Right ventricle myocardium superior (tissue), 1 donor: ENCODE measurements at regions of chr3 and their contacts with region 1.

Region 1: GRCh38 chr3:113287803-113288648 is 76.7 kb downstream of the BOC start:
- DNase-seq: no peak
- ATAC-seq: peak; percentile 72

Region 2: DNA sequence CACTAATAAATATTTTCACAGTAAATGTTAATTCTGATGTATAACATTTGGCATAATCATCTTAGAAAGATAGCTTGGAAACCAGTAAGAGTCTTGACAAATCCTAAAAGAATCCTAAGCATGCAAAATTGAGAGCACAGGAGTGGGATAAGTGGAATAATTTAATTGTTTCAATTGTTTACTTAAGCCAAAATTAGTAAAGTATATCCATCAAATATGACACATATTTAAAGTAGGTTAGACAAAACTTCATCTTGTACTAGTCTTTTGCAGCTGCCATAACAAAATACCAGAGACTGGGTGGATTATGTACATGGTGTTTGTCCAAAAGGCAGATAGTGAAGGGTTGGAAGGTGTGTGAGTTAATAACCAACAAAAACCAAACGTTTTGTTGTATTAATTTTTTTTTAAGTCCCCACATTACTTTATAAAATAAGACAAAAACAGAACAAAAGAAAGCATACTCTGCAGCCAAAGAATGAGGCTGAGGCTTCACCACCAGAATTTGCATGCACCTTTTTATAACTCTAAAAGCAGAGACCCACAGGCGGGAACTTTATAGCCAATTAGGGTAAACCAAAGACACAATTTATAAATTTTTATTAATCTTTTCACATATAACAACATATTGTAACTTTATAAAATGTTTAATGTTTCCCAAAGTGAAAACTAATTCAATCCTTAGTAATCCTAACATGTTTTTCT is 399.5 kb before region 1 on chr3:
- intact Hi-C with region 1: no loop called
- DNase-seq: no peak
- ATAC-seq: no peak

Region 3: DNA sequence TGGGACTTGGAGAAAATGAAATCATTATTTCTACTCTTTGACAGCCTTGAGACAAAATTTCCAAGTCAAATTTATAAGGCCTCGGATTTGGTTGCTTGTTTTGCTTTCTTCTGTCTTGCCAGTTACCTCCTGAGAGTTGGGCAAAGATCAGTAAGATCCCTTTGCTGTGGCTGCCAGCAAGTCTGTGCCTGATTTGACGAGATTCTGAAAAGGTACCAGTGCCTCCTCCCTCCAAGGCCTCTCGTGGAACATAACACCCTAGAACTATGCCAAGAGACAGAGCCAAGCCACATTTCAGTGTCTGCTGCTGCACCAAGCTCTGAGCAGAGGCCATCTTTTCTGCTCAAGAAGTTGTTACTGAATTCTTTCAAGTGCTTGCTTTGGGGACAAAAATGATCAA is 236.2 kb before region 1 on chr3:
- intact Hi-C with region 1: loop called (anchors 2 kb)
- DNase-seq: no peak
- ATAC-seq: peak; percentile 56